ENCODE measurements at regions of chr9 and their contacts with region 1.

Region 1: DNA sequence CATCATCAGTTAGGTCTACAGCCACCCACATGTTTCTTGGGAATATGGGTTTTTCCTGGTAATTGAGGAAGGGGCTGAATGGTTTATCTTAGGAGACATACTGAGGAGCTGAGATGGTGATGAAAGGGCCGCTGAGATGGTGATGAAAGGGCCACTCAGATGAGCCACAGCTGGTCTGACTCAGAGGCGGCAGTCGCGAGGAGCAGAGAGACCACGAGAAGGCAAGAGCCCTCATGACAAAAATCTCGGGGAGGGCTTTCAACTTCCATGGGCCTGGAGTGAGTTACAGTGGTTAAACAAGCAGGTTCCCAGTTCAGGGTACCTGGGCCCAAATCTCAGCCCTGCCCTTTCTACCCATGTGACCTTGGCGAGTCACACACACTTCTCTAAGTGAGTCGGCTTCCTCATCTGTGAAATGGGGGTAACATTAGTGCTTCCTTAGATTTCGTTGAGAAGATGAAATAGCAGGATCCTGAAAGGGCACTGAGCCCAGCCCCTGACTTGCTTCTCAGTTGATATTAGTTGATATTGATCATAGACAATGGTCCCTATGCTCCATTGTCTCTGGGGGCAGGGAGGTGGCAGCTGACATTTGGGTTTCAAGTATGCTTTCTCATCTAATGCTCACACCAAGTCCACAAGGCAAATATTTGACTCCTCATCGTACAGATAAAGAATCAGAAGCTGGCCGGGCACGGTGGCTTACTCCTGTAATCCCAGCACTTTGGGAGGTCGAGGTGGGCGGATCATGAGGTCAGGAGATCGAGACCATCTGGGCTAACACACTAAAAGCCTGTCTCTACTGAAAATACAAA is 169.5 kb downstream of the RGS3 start:
- DNase-seq: no peak
- H3K4me3 ChIP-seq: no peak overlapping the region
- H3K27ac ChIP-seq: no peak overlapping the region
- H3K4me1 ChIP-seq: peaks cover 0 to 6% (median 4%) of the 10 kb centered on the region in 4 experiments; a peak in 3 of 7 replicates
- H3K27me3 ChIP-seq: peaks cover 0 to 1% (median 0%) of the 10 kb centered on the region in 4 experiments; a peak in 2 of 7 replicates
- CTCF ChIP-seq: no peak
- EP300 ChIP-seq: no peak
- POLR2A ChIP-seq: no peak
- RAD21 ChIP-seq: no peak

Region 2: DNA sequence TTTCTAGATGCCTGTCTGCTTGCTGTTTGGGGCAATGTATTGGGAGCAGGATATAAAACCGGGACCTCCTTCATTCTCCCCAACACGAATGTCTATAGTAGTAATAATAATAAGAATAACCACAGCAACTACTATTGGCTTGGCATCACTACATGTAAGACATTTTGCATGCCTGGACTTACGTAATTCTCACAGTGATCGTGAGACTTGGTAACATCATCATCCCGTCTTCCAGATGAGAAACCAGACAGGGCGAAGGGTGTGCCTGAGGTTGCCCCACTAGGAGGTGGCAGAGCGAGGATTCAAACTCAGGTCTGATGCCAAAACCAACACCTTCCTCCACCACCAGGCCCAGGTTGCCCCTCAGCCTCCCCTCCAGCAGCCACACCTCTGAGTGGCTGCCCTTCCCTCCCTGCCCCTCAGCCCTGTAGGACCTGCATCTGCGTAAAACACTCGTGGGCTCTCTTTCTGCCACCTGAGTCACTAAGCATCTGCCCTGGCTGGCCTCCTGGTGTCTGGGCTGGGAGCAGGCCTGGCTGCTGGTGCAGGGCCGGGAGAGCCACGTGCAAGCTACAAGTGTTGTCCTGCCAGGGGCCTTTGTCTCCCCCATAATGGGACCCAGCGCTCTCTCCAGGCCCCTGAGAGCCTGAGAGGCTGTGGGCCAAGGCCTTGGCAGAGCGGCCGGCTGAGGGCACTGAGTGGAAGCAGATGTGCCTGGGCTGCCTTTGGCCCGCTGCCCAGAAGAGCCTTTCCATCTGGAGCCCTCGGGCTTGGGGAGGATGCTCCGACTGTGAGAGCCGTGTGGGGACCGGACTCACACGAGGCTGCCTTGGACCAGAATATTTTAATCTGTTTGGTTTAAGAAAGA is 15.8 kb after region 1 on chr9:
- CTCF ChIA-PET with region 1: interaction called, 73 read pairs
- POLR2A ChIA-PET with region 1: interaction called, 5 read pairs
- DNase-seq: no peak
- H3K4me3 ChIP-seq: no peak overlapping the region
- H3K27ac ChIP-seq: no peak overlapping the region
- H3K4me1 ChIP-seq: peaks cover 0 to 15% (median 6%) of the 10 kb centered on the region in 4 experiments; a peak in 4 of 7 replicates
- H3K27me3 ChIP-seq: peaks cover 12 to 41% (median 32%) of the 10 kb centered on the region in 4 experiments
- CTCF ChIP-seq: no peak
- EP300 ChIP-seq: no peak
- POLR2A ChIP-seq: no peak
- RAD21 ChIP-seq: no peak

Region 3: DNA sequence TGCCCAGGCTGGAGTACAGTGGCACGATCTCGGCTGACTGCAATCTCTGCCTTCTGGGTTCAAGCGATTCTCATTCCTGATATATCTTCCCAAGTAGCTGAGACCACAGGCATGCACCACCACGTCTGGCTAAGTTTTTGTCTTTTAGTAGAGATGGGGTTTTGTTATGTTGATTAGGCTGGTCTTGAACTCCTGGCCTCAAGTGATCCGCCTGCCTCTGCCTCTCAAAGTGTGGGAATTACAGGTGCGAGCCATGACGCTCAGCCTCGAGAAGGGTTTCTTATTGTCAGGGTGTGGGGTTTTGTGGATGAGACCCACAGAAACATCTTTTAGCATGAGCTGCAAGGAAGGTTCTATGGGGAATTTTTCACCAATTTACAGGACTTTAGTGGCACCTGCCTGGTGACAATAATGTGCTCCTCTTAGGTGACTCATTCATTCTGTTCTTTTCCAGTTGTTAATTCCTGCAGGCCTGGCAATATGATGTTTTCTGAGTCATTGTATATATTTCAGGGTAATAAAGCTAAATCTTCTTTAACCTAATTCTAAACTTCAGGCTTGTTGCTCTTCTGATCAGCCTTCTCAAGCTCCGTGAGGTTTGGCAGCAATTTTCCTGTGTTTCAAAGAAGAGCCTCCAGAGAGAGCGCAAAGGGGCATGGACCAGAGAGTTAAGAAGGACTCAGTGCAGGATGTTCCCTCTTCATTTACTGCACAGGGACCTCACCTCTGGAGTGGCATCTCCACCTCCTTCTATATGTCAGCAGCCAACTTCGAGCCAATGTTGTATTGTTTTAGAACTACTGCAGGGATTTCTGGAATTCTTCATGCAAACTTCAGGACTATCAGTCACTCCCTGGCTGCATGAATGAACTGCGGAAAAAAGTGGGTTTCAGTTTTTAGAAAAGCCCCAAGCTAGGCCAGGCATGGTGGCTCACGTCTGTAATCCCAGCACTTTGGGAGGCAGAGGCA is 165.4 kb after region 1 on chr9:
- CTCF ChIA-PET with region 1: no interaction called
- POLR2A ChIA-PET with region 1: no interaction called
- DNase-seq: peak in 1 of 2 experiments; percentile 39
- H3K4me3 ChIP-seq: no peak overlapping the region
- H3K27ac ChIP-seq: no peak overlapping the region
- H3K4me1 ChIP-seq: peaks cover 0 to 4% (median 0%) of the 10 kb centered on the region in 4 experiments; a peak in 2 of 7 replicates
- H3K27me3 ChIP-seq: no peaks in the 10 kb centered on the region
- CTCF ChIP-seq: no peak
- EP300 ChIP-seq: no peak
- POLR2A ChIP-seq: no peak
- RAD21 ChIP-seq: no peak